ENCODE measurements at regions of chr11 and their contacts with region 1.

Region 1: DNA sequence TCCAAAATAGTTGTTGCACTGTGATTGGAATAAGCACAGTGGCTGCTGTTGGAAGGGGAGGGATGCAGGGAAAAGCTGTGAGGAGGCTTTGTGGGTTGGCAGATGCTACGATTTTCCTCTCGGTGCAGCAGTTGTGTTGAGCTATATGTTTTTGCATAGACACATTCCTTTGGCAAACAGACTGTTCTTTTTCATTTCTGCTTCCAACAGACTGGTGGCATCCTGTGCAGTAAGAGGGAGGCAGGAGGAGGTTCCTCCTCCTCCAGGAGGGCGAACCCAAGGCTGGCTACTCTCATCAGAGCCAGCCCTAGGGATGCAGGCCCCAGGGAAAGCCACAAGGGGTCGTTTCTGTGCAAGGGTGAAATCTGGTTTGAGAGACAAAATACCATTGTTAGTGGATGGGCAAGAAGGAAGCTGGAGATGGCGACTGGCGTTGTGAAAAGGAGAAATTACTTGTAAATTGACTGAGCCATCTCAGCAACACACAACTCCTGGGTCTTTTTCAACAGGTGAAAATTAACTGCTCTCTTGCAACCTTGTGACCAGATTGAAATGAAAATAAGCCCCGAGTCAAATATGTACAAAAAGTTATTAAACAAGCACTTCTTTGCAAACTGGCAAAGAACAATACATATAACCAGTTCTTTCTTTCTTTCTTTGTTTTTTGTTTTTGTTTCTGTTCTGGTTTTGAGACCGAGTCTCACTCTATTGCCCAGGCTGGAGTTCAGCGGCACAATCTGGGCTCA is 26.5 kb upstream of the UBASH3B start:
- H3K4me3 ChIP-seq: no peak overlapping the region
- H3K27ac ChIP-seq: no peak overlapping the region
- H3K4me1 ChIP-seq: no peaks in the 10 kb centered on the region
- CTCF ChIP-seq: peak; percentile 47; the same call in 1 of the 2 replicates

Region 2: DNA sequence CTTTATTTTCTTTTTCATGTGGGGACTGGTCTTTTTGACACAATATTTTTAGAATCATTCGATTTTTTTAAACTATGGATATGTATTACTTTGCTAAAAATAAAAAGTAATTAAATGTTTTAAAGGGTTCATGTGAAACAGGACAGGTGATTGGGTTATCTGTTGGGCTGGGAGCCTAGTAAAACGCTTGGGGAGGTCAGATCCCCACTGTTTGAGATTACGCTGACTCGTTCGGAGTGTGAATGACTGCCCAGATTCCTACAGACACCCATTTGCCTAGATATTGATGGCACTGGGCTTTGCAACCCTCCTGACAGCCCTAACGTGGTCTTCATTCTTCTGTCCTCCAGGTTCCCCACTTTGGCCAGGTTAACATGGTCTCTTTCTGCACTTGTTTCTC is 36.3 kb before region 1 on chr11:
- CTCF ChIA-PET with region 1: interaction called, 11 read pairs
- POLR2A ChIA-PET with region 1: no interaction called
- H3K4me3 ChIP-seq: no peak overlapping the region
- H3K27ac ChIP-seq: no peak overlapping the region
- H3K4me1 ChIP-seq: no peaks in the 10 kb centered on the region
- CTCF ChIP-seq: no peak

Region 3: GRCh38 chr11:122618927-122619326 is 10.1 kb before region 1 on chr11:
- CTCF ChIA-PET with region 1: interaction called, 10 read pairs
- POLR2A ChIA-PET with region 1: no interaction called
- H3K4me3 ChIP-seq: no peak overlapping the region
- H3K27ac ChIP-seq: no peak overlapping the region
- H3K4me1 ChIP-seq: no peaks in the 10 kb centered on the region
- CTCF ChIP-seq: no peak

Region 4: GRCh38 chr11:122681735-122682134 is 52.8 kb after region 1 on chr11:
- CTCF ChIA-PET with region 1: no interaction called
- POLR2A ChIA-PET with region 1: no interaction called
- H3K4me3 ChIP-seq: no peak overlapping the region
- H3K27ac ChIP-seq: no peak overlapping the region
- H3K4me1 ChIP-seq: no peaks in the 10 kb centered on the region
- CTCF ChIP-seq: no peak

Region 5: DNA sequence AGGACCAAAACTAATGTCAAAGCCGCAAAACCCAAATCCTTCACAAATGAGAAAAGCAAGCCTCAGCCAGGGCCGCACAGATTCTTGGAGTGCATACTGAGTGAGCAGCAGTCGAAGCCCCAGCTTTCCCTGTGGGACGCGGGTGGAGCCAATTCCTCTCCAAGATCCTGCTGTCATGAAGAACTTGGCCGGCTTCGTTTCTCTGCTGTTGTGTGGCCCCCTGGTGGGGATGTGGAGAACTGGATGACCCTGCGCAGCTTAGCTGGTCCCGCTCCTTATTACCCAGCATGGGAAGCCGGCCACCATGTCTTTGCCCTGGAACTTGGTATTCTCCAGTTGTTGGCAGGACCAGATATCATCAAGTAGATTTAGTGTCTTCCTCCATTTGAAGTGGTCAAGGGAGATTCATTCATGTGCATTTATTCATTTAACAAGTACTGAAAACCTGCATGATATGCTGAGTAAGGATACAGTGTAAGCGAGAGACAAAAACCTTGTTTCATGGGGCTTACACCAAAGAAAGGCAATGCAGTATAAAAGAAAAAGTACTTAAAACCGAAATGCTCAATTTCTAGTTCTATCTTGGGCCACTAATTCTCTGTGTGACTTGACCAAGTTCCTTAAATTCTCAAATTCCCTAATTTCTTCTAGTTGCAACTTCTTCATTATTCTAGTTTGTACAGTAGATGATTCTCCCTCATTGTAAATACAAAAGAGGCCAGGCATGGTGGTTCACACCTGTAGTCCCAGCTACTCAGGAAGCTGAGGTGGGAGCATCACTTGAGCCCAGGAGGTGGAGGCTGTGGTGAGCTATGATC is 152.6 kb after region 1 on chr11:
- CTCF ChIA-PET with region 1: interaction called, 171 read pairs
- POLR2A ChIA-PET with region 1: no interaction called
- H3K4me3 ChIP-seq: no peak overlapping the region
- H3K27ac ChIP-seq: no peak overlapping the region
- H3K4me1 ChIP-seq: no peaks in the 10 kb centered on the region
- CTCF ChIP-seq: peak; percentile 72

Region 6: DNA sequence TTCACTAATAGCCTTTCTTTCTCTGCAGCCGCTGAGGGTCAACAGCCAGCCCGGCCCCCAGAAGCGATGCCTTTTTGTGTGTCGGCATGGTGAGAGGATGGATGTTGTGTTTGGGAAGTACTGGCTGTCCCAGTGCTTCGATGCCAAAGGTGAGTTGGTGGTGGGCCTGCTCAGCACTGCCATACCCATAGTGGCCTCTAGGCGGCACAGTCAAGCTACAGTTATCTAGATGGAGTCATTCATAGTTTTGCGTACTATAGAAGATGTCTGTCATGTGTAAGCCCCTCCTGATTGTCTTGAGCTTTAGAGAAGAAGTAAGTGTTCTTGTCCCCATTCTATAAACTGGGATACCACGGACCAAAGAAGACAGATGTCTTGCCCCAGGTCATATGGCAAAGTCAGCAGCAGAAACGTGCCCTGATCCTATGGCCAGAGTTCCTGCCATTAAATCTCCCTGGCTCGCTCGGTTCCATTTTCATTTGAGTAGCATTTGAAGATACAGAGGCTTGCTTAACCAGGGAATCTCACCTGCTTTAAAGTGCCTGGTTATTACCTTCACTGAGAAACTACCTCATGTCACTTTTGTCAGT is 167.2 kb after region 1 on chr11:
- CTCF ChIA-PET with region 1: interaction called, 14 read pairs
- POLR2A ChIA-PET with region 1: no interaction called
- H3K4me3 ChIP-seq: no peak overlapping the region
- H3K27ac ChIP-seq: no peak overlapping the region
- H3K4me1 ChIP-seq: no peaks in the 10 kb centered on the region
- CTCF ChIP-seq: no peak

Region 7: GRCh38 chr11:122863704-122864326 is 234.8 kb after region 1 on chr11:
- CTCF ChIA-PET with region 1: interaction called, 13 read pairs
- POLR2A ChIA-PET with region 1: no interaction called
- H3K4me3 ChIP-seq: no peak overlapping the region
- H3K27ac ChIP-seq: no peak overlapping the region
- H3K4me1 ChIP-seq: no peaks in the 10 kb centered on the region
- CTCF ChIP-seq: no peak

Measured in HEK293 (cell line).